ENCODE measurements at regions of chr2 and their contacts with region 1.

Region 1: DNA sequence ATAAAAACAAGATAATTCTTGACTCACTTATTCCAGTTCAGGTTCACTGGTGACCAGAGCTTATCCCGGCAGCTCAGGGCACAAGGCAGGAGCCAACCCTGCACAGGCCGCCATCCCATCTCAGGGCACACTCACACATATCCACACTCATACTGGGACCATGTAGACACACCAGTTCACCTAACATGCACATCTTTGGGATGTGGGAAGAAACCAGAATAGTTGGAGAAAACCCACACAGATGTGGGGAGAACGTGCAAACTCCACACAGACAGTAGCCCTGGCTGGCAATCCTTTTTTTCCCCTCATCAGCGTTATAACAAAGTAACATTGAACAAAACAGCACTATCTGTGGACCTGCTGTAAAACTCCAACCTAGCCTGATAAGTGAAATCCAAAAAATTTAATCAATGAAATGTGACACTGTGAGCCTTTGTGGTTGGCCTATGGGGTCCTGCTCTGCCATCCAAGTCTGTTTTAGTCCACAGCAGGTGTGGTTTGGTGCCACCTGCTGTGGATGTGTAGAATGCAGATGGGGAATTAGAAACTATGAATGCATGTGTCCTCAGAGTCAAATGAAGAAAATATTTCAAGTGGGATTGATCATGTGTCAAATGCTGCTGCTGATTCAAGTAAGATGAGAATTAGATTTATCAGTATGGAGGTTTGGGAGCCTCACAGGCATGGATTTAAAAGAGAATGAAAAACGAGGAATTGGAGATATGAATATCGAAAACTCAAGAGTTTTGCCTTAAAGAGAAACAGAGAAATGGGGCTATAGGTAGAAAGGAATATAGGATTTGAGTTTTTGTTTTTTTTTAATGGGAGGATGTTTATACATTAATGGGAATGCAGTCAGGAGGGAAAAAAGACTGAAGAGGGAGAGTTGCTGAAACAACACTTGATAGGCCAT is 47.0 kb downstream of the UGP2 start:
- DNase-seq: peak; percentile 48
- ATAC-seq: peak; percentile 87
- H3K4me3 ChIP-seq: no peak overlapping the region
- H3K27ac ChIP-seq: no peak overlapping the region
- H3K4me1 ChIP-seq: peaks cover 2% of the 10 kb centered on the region; the same call in 1 of the 2 replicates
- H3K27me3 ChIP-seq: no peaks in the 10 kb centered on the region
- CTCF ChIP-seq: peak; percentile 75
- POLR2A ChIP-seq: no peak
- RAD21 ChIP-seq: peak; percentile 79

Region 2: DNA sequence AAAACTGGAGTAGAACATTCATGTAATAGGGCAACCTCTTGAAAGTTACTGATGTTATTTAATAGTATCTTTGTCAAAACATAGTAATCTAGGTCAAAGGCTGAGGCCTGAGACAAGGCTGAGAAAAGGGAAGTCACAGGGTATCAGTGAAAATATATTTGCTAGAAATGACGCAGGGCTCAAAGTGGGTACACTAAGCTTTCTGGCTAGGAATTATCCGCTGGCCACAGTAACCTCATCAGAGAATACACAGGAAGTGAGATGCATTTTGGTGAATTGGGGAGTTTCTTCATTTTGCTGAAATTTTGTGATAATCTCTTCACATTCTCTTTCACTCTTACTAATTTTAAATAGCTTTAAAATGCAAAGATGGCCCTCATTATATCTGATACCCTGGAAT is 631.3 kb before region 1 on chr2:
- CTCF ChIA-PET with region 1: no interaction called
- POLR2A ChIA-PET with region 1: no interaction called
- dilution Hi-C with region 1: no loop called
- in situ Hi-C with region 1: no loop called
- intact Hi-C with region 1: no loop called
- DNase-seq: no peak
- ATAC-seq: no peak
- H3K4me3 ChIP-seq: no peak overlapping the region
- H3K27ac ChIP-seq: no peak overlapping the region
- H3K4me1 ChIP-seq: no peaks in the 10 kb centered on the region
- H3K27me3 ChIP-seq: no peaks in the 10 kb centered on the region
- CTCF ChIP-seq: no peak
- POLR2A ChIP-seq: no peak
- RAD21 ChIP-seq: no peak

Region 3: DNA sequence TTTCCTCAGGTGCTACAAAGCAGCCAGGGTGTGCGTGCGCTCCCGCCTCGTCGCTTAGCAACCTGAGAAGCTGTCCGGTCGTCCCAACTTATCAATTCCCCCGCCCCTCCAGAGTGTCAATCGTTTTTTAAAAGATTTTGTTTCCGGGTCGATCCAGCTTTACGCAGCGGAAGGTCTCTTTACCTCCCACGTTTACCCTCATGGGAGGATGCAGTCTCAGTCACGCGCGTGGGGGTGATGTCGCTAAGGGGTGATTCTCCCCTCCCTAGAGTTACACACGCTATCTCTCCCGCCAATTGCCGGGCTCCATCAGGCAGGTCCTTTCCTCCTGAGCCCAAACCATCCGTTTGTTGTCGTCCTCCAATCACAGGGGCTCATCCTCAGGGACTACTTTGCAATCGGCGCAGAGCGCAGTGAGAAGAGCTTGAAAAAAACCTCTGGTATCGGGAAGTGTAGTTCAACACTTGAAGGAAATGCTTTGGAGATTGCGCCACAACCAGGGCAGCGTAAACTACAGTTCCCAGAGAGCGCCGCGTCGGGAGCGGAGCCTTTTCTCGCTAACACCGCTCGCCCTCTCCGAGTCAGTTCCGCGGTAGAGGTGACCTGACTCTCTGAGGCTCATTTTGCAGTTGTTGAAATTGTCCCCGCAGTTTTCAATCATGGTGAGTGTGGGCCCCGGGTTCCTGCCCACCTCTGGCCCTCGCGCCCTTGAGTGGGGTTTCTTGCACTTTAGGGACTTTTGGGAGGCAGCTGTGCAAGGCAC is 300.2 kb before region 1 on chr2 and contains the starts of genes MDH1 and WDPCP:
- CTCF ChIA-PET with region 1: no interaction called
- POLR2A ChIA-PET with region 1: no interaction called
- dilution Hi-C with region 1: no loop called
- in situ Hi-C with region 1: no loop called
- intact Hi-C with region 1: loop called (anchors 5 kb)
- DNase-seq: peak; percentile 100
- ATAC-seq: peak; percentile 93
- H3K4me3 ChIP-seq: peak within 1 kb of the TSS; percentile 77
- H3K27ac ChIP-seq: peak within 1 kb of the TSS; percentile 68
- H3K4me1 ChIP-seq: peaks cover 2% of the 10 kb centered on the region; the same call in 1 of the 2 replicates
- H3K27me3 ChIP-seq: no peaks in the 10 kb centered on the region
- CTCF ChIP-seq: no peak
- POLR2A ChIP-seq: peak; percentile 59; the same call in 1 of the 2 replicates
- RAD21 ChIP-seq: no peak
- total RNA-seq, gene MDH1: 212 and 248 TPM in 2 replicates
- total RNA-seq, gene WDPCP: 7.8 and 10.2 TPM in 2 replicates

Region 4: GRCh38 chr2:63680455-63680854 is 208.3 kb before region 1 on chr2:
- CTCF ChIA-PET with region 1: no interaction called
- POLR2A ChIA-PET with region 1: no interaction called
- dilution Hi-C with region 1: no loop called
- in situ Hi-C with region 1: loop called (anchors 10 kb)
- intact Hi-C with region 1: no loop called
- DNase-seq: no peak
- ATAC-seq: no peak
- H3K4me3 ChIP-seq: no peak overlapping the region
- H3K27ac ChIP-seq: no peak overlapping the region
- H3K4me1 ChIP-seq: no peaks in the 10 kb centered on the region; the same call in 1 of the 2 replicates
- H3K27me3 ChIP-seq: no peaks in the 10 kb centered on the region; the same call in 1 of the 2 replicates
- CTCF ChIP-seq: no peak
- POLR2A ChIP-seq: no peak
- RAD21 ChIP-seq: no peak

Region 5: DNA sequence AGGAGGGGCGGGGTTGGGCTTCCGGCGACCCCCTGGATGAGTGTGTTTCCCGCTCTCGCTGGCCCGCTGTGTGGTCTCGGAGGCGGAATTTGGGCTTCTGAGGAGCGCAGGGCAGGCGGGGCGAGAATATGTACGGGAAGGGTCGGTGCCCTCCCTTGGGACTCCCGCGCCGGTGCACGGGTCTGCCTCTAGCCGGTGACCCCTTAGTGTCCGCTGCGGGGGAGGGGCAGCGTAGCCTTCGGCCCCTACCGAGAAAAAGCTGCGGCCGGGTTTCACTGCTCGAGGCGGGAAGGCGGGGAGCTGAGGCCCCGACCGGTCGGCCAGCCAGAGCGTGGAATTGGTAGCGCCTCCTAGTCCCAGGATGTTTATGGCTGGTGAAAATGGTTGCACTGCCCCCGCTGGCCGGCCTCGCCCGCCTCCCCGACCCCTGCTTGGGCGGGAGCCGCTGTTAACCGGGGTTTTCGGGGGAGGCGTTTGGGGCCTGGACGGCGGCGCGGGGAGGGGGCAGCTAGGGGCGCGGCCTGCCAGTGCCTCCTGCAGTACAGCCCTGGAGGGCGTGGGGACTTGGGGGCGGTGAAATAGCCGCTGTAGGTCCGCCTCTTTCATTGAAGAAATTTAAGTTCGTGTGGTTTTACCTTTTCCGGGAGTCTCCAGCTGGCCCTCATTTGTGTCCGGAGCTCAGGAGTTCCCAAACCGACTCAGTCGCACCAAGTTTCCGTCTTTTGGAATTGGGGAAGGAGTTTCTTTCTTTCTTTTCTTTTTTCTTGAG is 47.3 kb before region 1 on chr2 and contains the start of gene UGP2:
- CTCF ChIA-PET with region 1: no interaction called
- POLR2A ChIA-PET with region 1: no interaction called
- dilution Hi-C with region 1: no loop called
- in situ Hi-C with region 1: no loop called
- intact Hi-C with region 1: loop called (anchors 2 kb)
- DNase-seq: peak; percentile 92
- ATAC-seq: peak; percentile 82
- H3K4me3 ChIP-seq: peak within 1 kb of the TSS; percentile 69
- H3K27ac ChIP-seq: peak within 1 kb of the TSS; percentile 90
- H3K4me1 ChIP-seq: peaks cover 6% of the 10 kb centered on the region
- H3K27me3 ChIP-seq: no peaks in the 10 kb centered on the region
- CTCF ChIP-seq: 0 out of 2 replicates have a peak, but pooled peaks have one; percentile 27
- POLR2A ChIP-seq: peak; percentile 93
- RAD21 ChIP-seq: no peak; the same call in 1 of the 2 replicates
- total RNA-seq, gene UGP2: 58.8 and 101 TPM in 2 replicates

Measured in IMR-90 (cell line).